Activated T-helper 1 cell treated with anti-CD3 and anti-CD28 coated beads, Interleukin-12 subunit alpha, Interleukin-12 subunit beta, Interleukin-2, Interleukin-4 antibody, amounts not matched to agents 30 ng/mL and 10 ng/mL and 1 ng/mL, durations not matched to agents 14 hours and 24 hours and 36 hours (primary cell): ENCODE measurements at regions of chr6 and their contacts with region 1.

Region 1: DNA sequence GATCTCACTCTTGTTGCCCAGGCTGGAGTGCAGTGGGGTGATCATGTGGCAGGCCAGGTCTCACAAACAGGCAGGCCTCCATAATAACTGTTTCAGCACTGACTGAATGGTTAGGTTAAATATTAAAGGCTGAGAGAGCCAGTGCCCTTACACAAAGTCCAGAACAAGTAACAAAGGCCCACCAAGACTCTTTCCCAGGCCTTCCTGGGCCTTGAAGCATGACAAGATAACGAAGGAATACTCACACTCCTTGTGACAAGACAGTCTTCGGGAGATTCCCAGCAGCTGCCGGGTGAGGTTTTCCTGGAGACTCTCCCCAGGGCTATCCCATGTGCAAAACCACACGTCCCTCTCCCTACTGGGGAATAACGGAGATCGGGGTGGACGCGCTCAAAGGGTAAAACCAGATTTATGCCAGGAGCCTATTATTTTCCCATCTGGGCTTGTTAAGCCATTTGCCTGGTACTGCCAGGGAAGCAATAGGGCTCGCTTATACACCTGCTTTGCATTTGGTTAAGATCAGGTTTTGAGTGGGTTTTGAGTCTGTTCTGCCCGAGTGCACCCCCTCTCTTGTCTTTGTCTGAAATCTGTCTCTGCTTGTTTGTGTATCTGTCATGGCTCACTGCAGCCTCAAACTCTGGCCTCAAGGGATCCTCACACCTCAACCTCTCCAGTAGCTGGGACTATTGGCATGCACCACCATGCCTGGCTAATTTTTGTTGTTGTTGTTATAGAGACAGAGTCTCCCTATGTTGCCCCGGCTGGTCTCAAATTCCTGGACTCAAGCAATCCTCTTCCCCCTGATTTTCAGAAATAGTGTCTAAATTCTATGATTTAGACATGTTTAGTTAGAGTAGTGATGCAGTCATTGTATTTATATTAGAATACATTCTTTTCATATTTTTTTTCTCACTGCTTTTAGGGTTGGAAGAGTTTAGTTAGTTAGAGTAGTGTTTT is 1.4 kb upstream of the ENPP3 start:
- DNase-seq: no peak
- H3K4me3 Mint-ChIP-seq: no peak overlapping the region
- H3K27ac Mint-ChIP-seq: no peak overlapping the region
- H3K4me1 Mint-ChIP-seq: peaks cover 14% of the 10 kb centered on the region
- H3K27me3 Mint-ChIP-seq: peaks cover 6% of the 10 kb centered on the region

Region 2: DNA sequence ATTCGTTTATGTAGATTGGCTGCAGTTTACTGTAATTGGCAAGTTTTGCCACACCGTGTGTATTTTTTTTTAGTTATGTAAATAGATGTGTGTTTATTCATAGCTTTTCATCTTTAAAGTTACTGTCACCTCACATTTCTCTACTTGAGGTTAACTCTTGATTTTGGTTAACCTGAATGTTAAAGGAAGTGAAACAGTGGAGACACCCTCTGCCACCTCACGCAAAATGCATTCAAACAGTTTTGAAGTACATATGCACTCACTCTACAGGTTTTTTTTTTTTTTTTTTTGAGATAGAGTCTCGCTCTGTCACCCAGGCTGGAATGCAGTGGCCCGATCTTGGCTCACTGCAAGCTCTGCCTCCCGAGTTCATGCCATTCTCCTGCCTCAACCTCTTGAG is 47.8 kb after region 1 on chr6:
- intact Hi-C with region 1: loop called (anchors 1 kb)
- DNase-seq: no peak
- H3K4me3 Mint-ChIP-seq: no peak overlapping the region
- H3K27ac Mint-ChIP-seq: no peak overlapping the region
- H3K4me1 Mint-ChIP-seq: peaks cover 24% of the 10 kb centered on the region
- H3K27me3 Mint-ChIP-seq: peaks cover 4% of the 10 kb centered on the region

Region 3: GRCh38 chr6:131807644-131808459 is 172.2 kb after region 1 on chr6 and contains the start of gene ENPP1:
- intact Hi-C with region 1: loop called (anchors 10 kb)
- DNase-seq: peak; percentile 17
- H3K4me3 Mint-ChIP-seq: peak within 1 kb of the TSS; percentile 82
- H3K27ac Mint-ChIP-seq: no peak within 1 kb of the TSS
- H3K4me1 Mint-ChIP-seq: peaks cover 7% of the 10 kb centered on the region
- H3K27me3 Mint-ChIP-seq: peaks cover 53% of the 10 kb centered on the region
- total RNA-seq, gene ENPP1: 1.0 and 1.2 TPM in 2 replicates